Endothelial cell of umbilical vein (primary cell): ENCODE measurements at regions of chr1 and their contacts with region 1.

Region 1: GRCh38 chr1:246699095-246699735 is 25.0 kb upstream of the SCCPDH start:
- DNase-seq: peak; percentile 93
- H3K4me3 ChIP-seq: no peak overlapping the region
- H3K27ac ChIP-seq: peak overlapping the region; percentile 53
- H3K4me1 ChIP-seq: peaks cover 5% of the 10 kb centered on the region
- H3K27me3 ChIP-seq: no peaks in the 10 kb centered on the region
- CTCF ChIP-seq: peak; percentile 91 to 92
- POLR2A ChIP-seq: no peak

Region 2: DNA sequence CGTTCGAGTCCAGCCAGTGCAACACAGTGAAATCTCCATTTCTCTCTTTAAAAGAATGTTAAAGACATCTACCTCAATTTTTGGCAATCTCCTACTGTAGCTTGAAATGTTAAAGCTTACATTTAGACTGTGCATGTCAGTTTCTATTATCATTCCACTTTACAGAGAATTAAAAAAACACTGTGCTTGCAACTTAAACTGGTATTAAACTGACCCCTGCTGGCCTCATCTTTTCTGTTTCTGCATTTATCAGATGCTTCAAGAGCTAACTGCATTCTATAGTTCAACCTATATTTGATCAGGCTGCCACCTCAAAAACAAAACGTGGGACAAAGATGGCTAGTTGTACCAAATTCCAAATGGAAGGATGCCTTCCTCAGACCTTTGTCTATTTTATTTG is 418.7 kb before region 1 on chr1:
- CTCF ChIA-PET with region 1: no interaction called
- POLR2A ChIA-PET with region 1: no interaction called
- dilution Hi-C with region 1: no loop called
- intact Hi-C with region 1: no loop called
- DNase-seq: peak; percentile 36
- H3K4me3 ChIP-seq: no peak overlapping the region
- H3K27ac ChIP-seq: no peak overlapping the region
- H3K4me1 ChIP-seq: no peaks in the 10 kb centered on the region
- H3K27me3 ChIP-seq: no peaks in the 10 kb centered on the region
- CTCF ChIP-seq: no peak
- POLR2A ChIP-seq: no peak

Region 3: DNA sequence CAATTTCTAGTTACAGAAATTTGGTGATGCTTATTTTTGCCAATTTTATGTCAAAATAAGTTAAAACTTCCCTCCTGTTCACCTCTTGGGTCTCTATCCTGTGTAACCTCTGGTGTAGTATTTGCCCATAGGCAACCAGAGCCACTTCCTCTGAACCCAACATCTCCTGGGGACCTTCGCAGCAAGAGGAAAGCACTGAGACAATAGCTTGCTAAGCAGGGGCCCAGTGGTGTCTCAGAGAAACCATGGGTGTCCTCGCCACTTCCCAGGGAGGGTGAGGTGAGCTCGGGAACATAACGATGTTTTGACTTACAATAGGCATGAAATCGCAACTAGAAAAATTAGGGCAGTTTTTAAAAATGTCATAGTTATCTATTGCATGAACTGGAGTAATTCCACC is 31.4 kb before region 1 on chr1:
- CTCF ChIA-PET with region 1: no interaction called
- POLR2A ChIA-PET with region 1: no interaction called
- dilution Hi-C with region 1: no loop called
- intact Hi-C with region 1: no loop called
- DNase-seq: no peak
- H3K4me3 ChIP-seq: no peak overlapping the region
- H3K27ac ChIP-seq: no peak overlapping the region
- H3K4me1 ChIP-seq: no peaks in the 10 kb centered on the region
- H3K27me3 ChIP-seq: no peaks in the 10 kb centered on the region
- CTCF ChIP-seq: no peak
- POLR2A ChIP-seq: no peak

Region 4: DNA sequence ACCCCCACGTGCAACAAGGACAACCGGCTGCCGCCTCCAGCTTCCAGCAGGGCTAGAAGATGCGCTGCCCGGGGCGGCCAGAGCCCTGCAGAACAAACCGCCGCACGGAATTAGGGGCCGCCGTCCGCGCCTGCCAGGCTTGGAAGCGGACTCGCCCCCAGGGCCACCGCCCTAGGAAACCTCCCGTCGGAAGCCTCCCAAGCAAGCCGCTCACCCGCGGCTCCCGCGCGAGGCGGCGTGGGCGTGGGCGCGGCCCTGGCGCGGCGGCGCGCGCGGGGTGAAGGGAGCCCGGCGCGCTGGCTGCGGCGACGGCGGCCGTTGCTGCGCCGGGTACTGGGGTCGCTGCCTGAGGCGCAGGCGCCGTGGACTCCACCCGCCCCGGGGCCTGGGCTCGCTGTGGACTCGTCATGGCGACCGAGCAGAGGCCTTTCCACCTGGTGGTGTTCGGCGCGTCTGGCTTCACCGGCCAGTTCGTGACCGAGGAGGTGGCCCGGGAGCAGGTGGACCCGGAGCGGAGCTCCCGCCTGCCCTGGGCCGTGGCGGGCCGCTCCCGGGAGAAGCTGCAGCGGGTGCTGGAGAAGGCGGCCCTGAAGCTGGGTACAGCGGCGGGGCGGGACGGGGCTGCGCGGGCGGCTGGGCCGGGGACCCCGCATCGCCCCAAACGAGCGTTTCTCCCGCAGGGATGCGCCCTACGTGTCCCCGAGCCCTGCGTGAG is 25.0 kb after region 1 on chr1 and contains the start of gene SCCPDH:
- CTCF ChIA-PET with region 1: interaction called, 3 read pairs
- POLR2A ChIA-PET with region 1: no interaction called
- dilution Hi-C with region 1: no loop called
- intact Hi-C with region 1: loop called (anchors 1 kb)
- DNase-seq: peak; percentile 79
- H3K4me3 ChIP-seq: peak within 1 kb of the TSS; percentile 74 to 91 (median 89)
- H3K27ac ChIP-seq: peak within 1 kb of the TSS; percentile 29
- H3K4me1 ChIP-seq: peaks cover 6% of the 10 kb centered on the region
- H3K27me3 ChIP-seq: no peaks in the 10 kb centered on the region
- CTCF ChIP-seq: no peak
- POLR2A ChIP-seq: peak; percentile 83
- total RNA-seq, gene SCCPDH: 33.8 and 37.5 TPM in 2 replicates

Region 5: GRCh38 chr1:246753670-246754535 is 54.7 kb after region 1 on chr1:
- CTCF ChIA-PET with region 1: interaction called, 4 read pairs
- POLR2A ChIA-PET with region 1: no interaction called
- dilution Hi-C with region 1: no loop called
- intact Hi-C with region 1: loop called (anchors 1 kb)
- DNase-seq: peak; percentile 60
- H3K4me3 ChIP-seq: no peak overlapping the region
- H3K27ac ChIP-seq: no peak overlapping the region
- H3K4me1 ChIP-seq: no peaks in the 10 kb centered on the region
- H3K27me3 ChIP-seq: no peaks in the 10 kb centered on the region
- CTCF ChIP-seq: peak; percentile 74 to 80
- POLR2A ChIP-seq: no peak